A673 (cell line): ENCODE measurements at regions of chr3 and their contacts with region 1.

Region 1: DNA sequence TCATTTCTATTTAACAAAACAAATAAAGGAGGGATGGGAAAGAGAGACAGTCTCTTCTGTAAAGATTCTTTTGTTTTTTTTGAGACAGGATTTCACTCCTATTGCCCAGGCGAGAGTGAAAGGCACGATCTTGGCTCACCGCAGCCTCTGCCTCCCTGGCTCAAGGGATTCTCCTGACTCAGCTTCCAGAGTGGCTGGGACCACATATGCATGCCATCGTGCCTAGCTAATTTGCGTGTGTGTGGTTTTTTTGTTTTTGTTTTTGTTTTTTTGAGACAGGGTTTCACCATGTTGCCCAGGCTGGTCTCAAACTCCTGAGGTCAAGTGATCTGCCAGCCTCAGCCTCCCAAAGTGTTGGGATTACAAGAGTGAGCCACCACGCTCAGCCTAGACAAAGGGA is 23.3 kb downstream of the STAG1 start:
- DNase-seq: no peak
- H3K4me3 ChIP-seq: peak overlapping the region; percentile 13
- H3K27ac ChIP-seq: peak overlapping the region; percentile 41
- H3K4me1 ChIP-seq: peaks cover 21% of the 10 kb centered on the region
- H3K27me3 ChIP-seq: no peaks in the 10 kb centered on the region
- CTCF ChIP-seq: no peak

Region 2: GRCh38 chr3:136109499-136109898 is 619.4 kb before region 1 on chr3:
- CTCF ChIA-PET with region 1: no interaction called
- POLR2A ChIA-PET with region 1: no interaction called
- intact Hi-C with region 1: no loop called
- DNase-seq: no peak
- H3K4me3 ChIP-seq: no peak overlapping the region
- H3K27ac ChIP-seq: no peak overlapping the region
- H3K4me1 ChIP-seq: no peaks in the 10 kb centered on the region
- H3K27me3 ChIP-seq: no peaks in the 10 kb centered on the region
- CTCF ChIP-seq: no peak

Region 3: DNA sequence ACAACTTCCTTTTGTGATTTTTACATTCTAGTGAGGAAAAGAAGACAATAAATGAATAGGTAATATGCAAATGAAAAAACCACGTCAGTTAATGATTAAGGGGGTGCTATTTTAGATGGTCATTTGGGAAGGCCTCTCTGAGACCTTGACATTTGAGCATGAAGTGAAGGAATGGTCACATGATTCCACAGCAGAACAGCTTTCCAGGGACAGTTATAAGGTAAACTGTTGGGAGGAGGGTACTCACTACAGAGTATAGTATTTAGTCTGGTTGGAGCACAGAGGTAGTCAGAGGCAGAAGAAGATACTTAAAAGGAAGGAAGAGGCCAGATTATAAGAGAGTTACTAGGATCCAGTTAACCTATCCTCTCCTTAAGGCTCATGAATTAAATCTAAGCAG is 223.2 kb before region 1 on chr3:
- CTCF ChIA-PET with region 1: no interaction called
- POLR2A ChIA-PET with region 1: interaction called, 11 read pairs
- intact Hi-C with region 1: no loop called
- DNase-seq: no peak
- H3K4me3 ChIP-seq: no peak overlapping the region
- H3K27ac ChIP-seq: no peak overlapping the region
- H3K4me1 ChIP-seq: no peaks in the 10 kb centered on the region
- H3K27me3 ChIP-seq: no peaks in the 10 kb centered on the region
- CTCF ChIP-seq: no peak

Region 4: GRCh38 chr3:136708333-136708985 is 20.5 kb before region 1 on chr3:
- CTCF ChIA-PET with region 1: interaction called, 10 read pairs
- POLR2A ChIA-PET with region 1: no interaction called
- intact Hi-C with region 1: no loop called
- DNase-seq: no peak
- H3K4me3 ChIP-seq: no peak overlapping the region
- H3K27ac ChIP-seq: no peak overlapping the region
- H3K4me1 ChIP-seq: no peaks in the 10 kb centered on the region
- H3K27me3 ChIP-seq: no peaks in the 10 kb centered on the region
- CTCF ChIP-seq: no peak

Region 5: GRCh38 chr3:136802481-136802996 is 73.6 kb after region 1 on chr3:
- CTCF ChIA-PET with region 1: no interaction called
- POLR2A ChIA-PET with region 1: no interaction called
- intact Hi-C with region 1: no loop called
- DNase-seq: peak; percentile 98
- H3K4me3 ChIP-seq: no peak overlapping the region
- H3K27ac ChIP-seq: peak overlapping the region; percentile 71
- H3K4me1 ChIP-seq: peaks cover 33% of the 10 kb centered on the region
- H3K27me3 ChIP-seq: no peaks in the 10 kb centered on the region
- CTCF ChIP-seq: no peak